Aorta (tissue), 5 donors: ENCODE measurements at regions of chr5 and their contacts with region 1.

Region 1: DNA sequence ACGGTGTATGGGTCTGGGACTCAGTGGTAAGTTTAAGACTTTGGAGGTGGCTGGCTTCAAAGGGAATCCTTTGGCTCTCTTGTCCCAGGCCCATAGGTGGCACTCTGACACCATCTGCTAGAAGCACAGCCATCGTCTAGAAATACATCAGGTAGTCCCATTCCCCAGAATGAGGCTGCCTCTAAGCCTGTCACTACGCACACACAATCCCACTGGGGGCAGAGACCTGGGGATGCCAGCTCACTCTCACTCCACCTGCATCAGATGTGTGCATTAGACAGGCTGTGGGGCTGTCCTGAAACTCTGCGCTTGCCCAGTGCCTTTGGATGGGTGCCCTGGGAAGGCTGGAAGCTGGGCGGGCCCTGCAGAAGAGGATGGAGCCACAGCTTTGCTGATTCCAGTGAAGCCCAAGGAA is 127.5 kb upstream of the PANK3 start:
- DNase-seq: peak in 1 of 2 donors; percentile 78
- ATAC-seq: peak; percentile 71
- H3K4me3 ChIP-seq: no peak overlapping the region
- H3K27ac ChIP-seq: no peak overlapping the region
- H3K4me1 ChIP-seq: no peaks in the 10 kb centered on the region
- H3K27me3 ChIP-seq: no peaks in the 10 kb centered on the region

Region 2: GRCh38 chr5:168950241-168950951 is 243.7 kb after region 1 on chr5:
- intact Hi-C with region 1: loop called in 1 of 2 experiments (anchors 10 kb)
- DNase-seq: no peak
- ATAC-seq: no peak
- H3K4me3 ChIP-seq: no peak overlapping the region
- H3K27ac ChIP-seq: no peak overlapping the region
- H3K4me1 ChIP-seq: no peaks in the 10 kb centered on the region
- H3K27me3 ChIP-seq: no peaks in the 10 kb centered on the region

Region 3: GRCh38 chr5:168987543-168988300 is 281.1 kb after region 1 on chr5:
- intact Hi-C with region 1: loop called in 1 of 2 experiments (anchors 10 kb)
- DNase-seq: peak; percentile 80 to 89
- ATAC-seq: peak; percentile 68
- H3K4me3 ChIP-seq: no peak overlapping the region
- H3K27ac ChIP-seq: no peak overlapping the region
- H3K4me1 ChIP-seq: no peaks in the 10 kb centered on the region
- H3K27me3 ChIP-seq: no peaks in the 10 kb centered on the region